Natural killer cell (primary cell): ENCODE measurements at regions of chr6 and their contacts with region 1.

Region 1: DNA sequence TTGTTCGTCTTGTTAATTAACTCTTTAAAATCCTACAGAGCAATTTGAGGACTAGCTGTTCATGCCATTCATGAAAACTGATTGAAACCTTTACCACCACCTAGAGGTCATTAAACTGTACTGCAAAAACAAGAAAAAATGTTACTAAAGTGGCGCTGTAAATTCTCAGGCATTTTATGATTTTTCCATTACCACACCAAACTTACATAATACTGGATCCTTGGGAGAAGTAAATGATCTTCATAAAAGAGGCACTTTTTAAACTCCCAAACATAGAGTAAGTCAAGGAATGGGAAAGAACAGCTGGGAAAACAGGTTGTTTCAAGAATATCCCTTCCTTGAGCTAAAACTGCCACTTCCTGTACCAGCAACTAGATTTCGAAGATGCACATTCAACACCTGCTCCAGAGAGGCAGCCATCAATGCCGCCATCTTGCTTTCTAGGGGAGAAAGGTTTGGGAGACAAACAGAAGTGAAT is 54.3 kb downstream of the MYLIP start:
- DNase-seq: peak in 1 of 2 donors; percentile 63
- ATAC-seq: peak in 1 of 3 donors; percentile 20
- H3K4me3 ChIP-seq: no peak overlapping the region
- H3K4me3 Mint-ChIP-seq: peak overlapping the region; percentile 35
- H3K27ac ChIP-seq: no peak overlapping the region
- H3K27ac Mint-ChIP-seq: peak overlapping the region in 1 of 2 donors; percentile 42
- H3K4me1 ChIP-seq: peaks cover 28% of the 10 kb centered on the region
- H3K4me1 Mint-ChIP-seq: peaks cover 39 to 41% of the 10 kb centered on the region in 2 donors
- H3K27me3 ChIP-seq: no peaks in the 10 kb centered on the region
- H3K27me3 Mint-ChIP-seq: no peaks in the 10 kb centered on the region
- CTCF ChIP-seq: peak; percentile 91

Region 2: GRCh38 chr6:15691250-15691869 is 491.9 kb before region 1 on chr6:
- intact Hi-C with region 1: loop called (anchors 1 kb)
- DNase-seq: peak; percentile 73 to 94
- ATAC-seq: peak; percentile 99 to 100 (median 100)
- H3K4me3 ChIP-seq: no peak overlapping the region
- H3K4me3 Mint-ChIP-seq: peak overlapping the region; percentile 17
- H3K27ac ChIP-seq: no peak overlapping the region
- H3K27ac Mint-ChIP-seq: peak overlapping the region in 1 of 2 donors; percentile 57
- H3K4me1 ChIP-seq: peaks cover 3% of the 10 kb centered on the region
- H3K4me1 Mint-ChIP-seq: peaks cover 8 to 9% of the 10 kb centered on the region in 2 donors
- H3K27me3 ChIP-seq: no peaks in the 10 kb centered on the region
- H3K27me3 Mint-ChIP-seq: peaks cover 10 to 22% of the 10 kb centered on the region in 2 donors
- CTCF ChIP-seq: peak; percentile 100

Region 3: GRCh38 chr6:15796130-15796771 is 387.0 kb before region 1 on chr6:
- intact Hi-C with region 1: no loop called
- DNase-seq: no peak
- ATAC-seq: no peak
- H3K4me3 ChIP-seq: no peak overlapping the region
- H3K4me3 Mint-ChIP-seq: no peak overlapping the region
- H3K27ac ChIP-seq: no peak overlapping the region
- H3K27ac Mint-ChIP-seq: no peak overlapping the region
- H3K4me1 ChIP-seq: no peaks in the 10 kb centered on the region
- H3K4me1 Mint-ChIP-seq: no peaks in the 10 kb centered on the region
- H3K27me3 ChIP-seq: no peaks in the 10 kb centered on the region
- H3K27me3 Mint-ChIP-seq: no peaks in the 10 kb centered on the region
- CTCF ChIP-seq: no peak

Region 4: GRCh38 chr6:16163535-16164300 is 19.5 kb before region 1 on chr6:
- intact Hi-C with region 1: loop called (anchors 2 kb)
- DNase-seq: no peak
- ATAC-seq: no peak
- H3K4me3 ChIP-seq: no peak overlapping the region
- H3K4me3 Mint-ChIP-seq: no peak overlapping the region
- H3K27ac ChIP-seq: no peak overlapping the region
- H3K27ac Mint-ChIP-seq: peak overlapping the region in 1 of 2 donors; percentile 1
- H3K4me1 ChIP-seq: peaks cover 13% of the 10 kb centered on the region
- H3K4me1 Mint-ChIP-seq: peaks cover 47 to 64% of the 10 kb centered on the region in 2 donors
- H3K27me3 ChIP-seq: no peaks in the 10 kb centered on the region
- H3K27me3 Mint-ChIP-seq: no peaks in the 10 kb centered on the region
- CTCF ChIP-seq: no peak